Activated B cell treated with CpG ODN at 0.5 μM for 24 hours (primary cell): ENCODE measurements at regions of chr17 and their contacts with region 1.

Region 1: GRCh38 chr17:60087882-60088669 is 9.4 kb upstream of the HEATR6 start:
- DNase-seq: no peak
- ATAC-seq: no peak
- H3K4me3 Mint-ChIP-seq: peak overlapping the region; percentile 2
- H3K27ac Mint-ChIP-seq: peak overlapping the region; percentile 91
- H3K4me1 Mint-ChIP-seq: peaks cover 72% of the 10 kb centered on the region
- H3K27me3 Mint-ChIP-seq: no peaks in the 10 kb centered on the region
- CTCF ChIP-seq: no peak

Region 2: DNA sequence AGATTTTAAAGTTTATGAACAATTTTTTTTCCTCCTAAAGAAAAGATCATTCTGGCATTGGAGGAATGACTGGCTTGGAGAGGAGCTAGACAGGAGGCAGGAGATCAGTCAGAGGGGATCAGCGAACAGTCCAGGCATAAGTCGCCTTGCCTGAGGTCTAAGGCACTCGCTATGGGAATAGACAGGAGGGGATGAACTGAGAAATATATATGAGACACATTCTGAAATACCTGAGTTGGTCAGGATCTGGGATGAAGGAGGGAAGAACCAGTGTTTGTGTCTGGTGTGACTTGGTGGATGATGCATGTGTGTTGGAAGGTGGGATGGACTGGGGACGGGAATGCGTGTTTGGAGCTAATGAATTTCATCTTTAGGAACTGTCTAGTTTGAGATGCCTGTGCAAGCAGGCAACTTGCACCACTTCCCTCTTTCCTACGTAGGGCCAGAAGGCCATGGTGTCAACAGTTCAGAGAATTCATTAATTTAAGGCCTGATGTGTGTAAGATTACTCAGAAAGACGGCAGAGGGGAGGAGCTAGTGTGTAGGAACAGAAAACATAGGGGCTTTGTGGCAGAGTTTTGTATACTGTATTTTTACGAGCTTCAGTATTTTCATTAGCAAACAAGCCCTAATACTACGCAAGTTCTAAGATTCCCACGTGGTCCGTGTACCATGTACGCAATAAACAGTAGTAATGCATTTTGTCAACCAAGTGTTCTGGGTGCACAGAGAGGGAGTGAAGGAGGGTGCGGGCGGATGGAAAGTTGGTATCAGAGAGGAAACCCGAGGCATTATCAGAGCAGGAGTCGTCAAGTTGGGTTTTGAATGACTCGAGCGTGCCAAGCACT is 10.2 kb before region 1 on chr17:
- CTCF ChIA-PET with region 1: interaction called, 13 read pairs
- POLR2A ChIA-PET with region 1: interaction called, 60 read pairs
- intact Hi-C with region 1: loop called (anchors 1 kb)
- DNase-seq: no peak
- ATAC-seq: peak; percentile 51
- H3K4me3 Mint-ChIP-seq: peak overlapping the region; percentile 94
- H3K27ac Mint-ChIP-seq: peak overlapping the region; percentile 86
- H3K4me1 Mint-ChIP-seq: peaks cover 40% of the 10 kb centered on the region
- H3K27me3 Mint-ChIP-seq: no peaks in the 10 kb centered on the region
- CTCF ChIP-seq: no peak

Region 3: GRCh38 chr17:60525685-60526514 is 437.8 kb after region 1 on chr17 and contains the start of gene APPBP2:
- CTCF ChIA-PET with region 1: no interaction called
- POLR2A ChIA-PET with region 1: no interaction called
- intact Hi-C with region 1: loop called (anchors 5 kb)
- DNase-seq: peak; percentile 76
- ATAC-seq: peak; percentile 84
- H3K4me3 Mint-ChIP-seq: peak within 1 kb of the TSS; percentile 96
- H3K27ac Mint-ChIP-seq: peak within 1 kb of the TSS; percentile 93
- H3K4me1 Mint-ChIP-seq: peaks cover 42% of the 10 kb centered on the region
- H3K27me3 Mint-ChIP-seq: no peaks in the 10 kb centered on the region
- CTCF ChIP-seq: no peak
- total RNA-seq, gene APPBP2: 25.5 and 29.9 TPM in 2 replicates

Region 4: DNA sequence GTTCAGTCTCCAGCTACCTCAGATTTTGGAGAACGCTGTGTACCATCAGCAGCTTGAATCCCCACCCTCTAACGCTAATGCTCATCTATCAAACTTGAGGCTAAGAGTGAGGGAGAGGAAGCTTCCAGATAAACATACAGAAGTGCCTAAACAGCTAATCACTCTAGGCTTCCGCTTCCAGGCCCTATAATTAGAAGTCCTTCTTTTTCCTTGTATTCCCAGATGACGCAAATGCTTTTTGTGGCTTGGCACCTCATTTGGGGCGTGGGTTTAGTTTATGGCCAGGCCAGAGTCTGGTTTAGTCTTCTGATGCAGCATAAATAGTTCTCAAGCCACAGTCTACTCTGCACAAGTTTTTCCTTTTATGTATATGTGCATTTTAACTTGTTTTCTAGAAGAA is 853.0 kb after region 1 on chr17:
- CTCF ChIA-PET with region 1: no interaction called
- POLR2A ChIA-PET with region 1: no interaction called
- intact Hi-C with region 1: no loop called
- DNase-seq: no peak
- ATAC-seq: no peak
- H3K4me3 Mint-ChIP-seq: no peak overlapping the region
- H3K27ac Mint-ChIP-seq: no peak overlapping the region
- H3K4me1 Mint-ChIP-seq: no peaks in the 10 kb centered on the region
- H3K27me3 Mint-ChIP-seq: no peaks in the 10 kb centered on the region
- CTCF ChIP-seq: no peak